ENCODE measurements at regions of chr3 and their contacts with region 1.

Region 1: DNA sequence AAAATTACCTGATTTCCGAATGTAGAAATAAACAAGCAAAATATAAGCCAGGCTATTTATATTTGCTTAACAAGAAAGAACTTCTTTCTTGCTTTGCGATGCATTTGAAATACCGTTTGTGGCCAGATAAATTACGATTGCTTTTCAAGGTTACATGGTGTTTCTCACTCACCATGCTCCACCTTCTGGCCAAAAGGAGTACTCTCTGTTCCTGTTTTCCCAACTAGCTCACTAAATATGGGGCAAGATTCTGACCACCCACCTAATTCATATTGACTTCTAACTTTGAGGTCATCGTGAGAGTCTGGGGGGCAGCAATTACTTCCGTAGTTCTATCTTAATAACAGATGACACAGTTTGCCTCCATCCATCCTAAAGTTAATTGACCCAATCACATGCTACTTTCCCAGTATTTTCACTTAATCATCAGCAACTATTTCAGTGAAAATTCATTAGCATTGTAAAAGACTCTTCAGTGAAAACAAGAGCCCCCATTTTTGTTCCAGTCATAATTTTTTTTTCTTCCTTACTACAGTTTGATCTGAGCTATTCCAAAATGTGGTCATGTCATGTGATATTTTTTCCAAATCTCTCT is 25.9 kb downstream of the ACP3 start:
- DNase-seq: peak; percentile 58
- ATAC-seq: peak; percentile 43
- H3K4me3 ChIP-seq: no peak overlapping the region
- H3K4me3 Mint-ChIP-seq: no peak overlapping the region
- H3K27ac ChIP-seq: no peak overlapping the region
- H3K27ac Mint-ChIP-seq: no peak overlapping the region
- H3K4me1 ChIP-seq: peaks cover 4% of the 10 kb centered on the region in 2 donors
- H3K4me1 Mint-ChIP-seq: peaks cover 3% of the 10 kb centered on the region
- H3K27me3 ChIP-seq: no peaks in the 10 kb centered on the region
- H3K27me3 Mint-ChIP-seq: no peaks in the 10 kb centered on the region
- CTCF ChIP-seq: peak; percentile 81

Region 2: DNA sequence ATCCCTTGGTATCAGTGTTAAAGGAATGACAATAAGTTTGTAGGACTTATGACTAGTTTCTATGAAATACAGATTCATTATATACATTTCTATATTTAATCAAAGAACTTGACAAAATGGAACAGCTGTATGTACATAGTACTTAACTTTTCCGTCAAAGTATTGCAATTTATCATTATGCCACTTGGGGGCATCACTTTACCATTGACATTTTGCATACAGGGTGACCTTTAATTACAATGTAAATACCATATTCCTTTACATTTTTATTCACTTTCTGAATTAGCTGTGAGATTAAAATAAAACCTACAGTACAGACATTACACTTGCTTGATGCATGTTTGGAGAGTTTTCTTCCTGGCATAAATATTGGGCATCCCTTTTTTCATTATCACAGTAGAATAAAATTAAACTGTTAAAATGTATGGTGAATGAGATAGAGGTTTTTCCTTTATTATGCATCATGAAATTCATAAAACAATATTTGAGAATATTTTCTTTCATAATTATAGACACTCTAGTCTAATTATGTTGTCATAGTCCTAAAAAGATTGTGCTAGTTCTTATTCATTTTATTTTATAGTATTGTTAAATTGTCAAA is 1309.5 kb before region 1 on chr3:
- CTCF ChIA-PET with region 1: interaction called, 6 read pairs
- POLR2A ChIA-PET with region 1: no interaction called
- intact Hi-C with region 1: loop called (anchors 2 kb)
- DNase-seq: peak; percentile 62
- ATAC-seq: peak; percentile 54
- H3K4me3 ChIP-seq: no peak overlapping the region
- H3K4me3 Mint-ChIP-seq: no peak overlapping the region
- H3K27ac ChIP-seq: no peak overlapping the region
- H3K27ac Mint-ChIP-seq: no peak overlapping the region
- H3K4me1 ChIP-seq: no peaks in the 10 kb centered on the region
- H3K4me1 Mint-ChIP-seq: no peaks in the 10 kb centered on the region
- H3K27me3 ChIP-seq: no peaks in the 10 kb centered on the region
- H3K27me3 Mint-ChIP-seq: no peaks in the 10 kb centered on the region
- CTCF ChIP-seq: peak; percentile 87

Region 3: GRCh38 chr3:131231710-131232389 is 1111.3 kb before region 1 on chr3:
- CTCF ChIA-PET with region 1: interaction called, 3 read pairs
- POLR2A ChIA-PET with region 1: no interaction called
- intact Hi-C with region 1: loop called (anchors 5 kb)
- DNase-seq: no peak
- ATAC-seq: no peak
- H3K4me3 ChIP-seq: no peak overlapping the region
- H3K4me3 Mint-ChIP-seq: no peak overlapping the region
- H3K27ac ChIP-seq: no peak overlapping the region
- H3K27ac Mint-ChIP-seq: no peak overlapping the region
- H3K4me1 ChIP-seq: no peaks in the 10 kb centered on the region
- H3K4me1 Mint-ChIP-seq: no peaks in the 10 kb centered on the region
- H3K27me3 ChIP-seq: no peaks in the 10 kb centered on the region
- H3K27me3 Mint-ChIP-seq: no peaks in the 10 kb centered on the region
- CTCF ChIP-seq: no peak

Region 4: GRCh38 chr3:132549890-132550578 is 206.9 kb after region 1 on chr3:
- CTCF ChIA-PET with region 1: no interaction called
- POLR2A ChIA-PET with region 1: interaction called, 10 read pairs
- intact Hi-C with region 1: no loop called
- DNase-seq: no peak
- ATAC-seq: no peak
- H3K4me3 ChIP-seq: no peak overlapping the region
- H3K4me3 Mint-ChIP-seq: no peak overlapping the region
- H3K27ac ChIP-seq: peak overlapping the region in 1 of 2 donors; percentile 39
- H3K27ac Mint-ChIP-seq: peak overlapping the region; percentile 1
- H3K4me1 ChIP-seq: peaks cover 0 to 7% of the 10 kb centered on the region in 2 donors
- H3K4me1 Mint-ChIP-seq: peaks cover 8% of the 10 kb centered on the region
- H3K27me3 ChIP-seq: no peaks in the 10 kb centered on the region
- H3K27me3 Mint-ChIP-seq: no peaks in the 10 kb centered on the region
- CTCF ChIP-seq: no peak

Measured in B cell (primary cell).